Activated CD4-positive, alpha-beta memory T cell treated with anti-CD3 and anti-CD28 coated beads for 36 hours (primary cell): ENCODE measurements at regions of chrX and their contacts with region 1.

Region 1: GRCh38 chrX:9638871-9639270 is 126.8 kb downstream of the GPR143 start:
- DNase-seq: no peak
- H3K4me3 Mint-ChIP-seq: no peak overlapping the region
- H3K27ac Mint-ChIP-seq: no peak overlapping the region
- H3K4me1 Mint-ChIP-seq: peaks cover 25% of the 10 kb centered on the region
- H3K27me3 Mint-ChIP-seq: no peaks in the 10 kb centered on the region

Region 2: DNA sequence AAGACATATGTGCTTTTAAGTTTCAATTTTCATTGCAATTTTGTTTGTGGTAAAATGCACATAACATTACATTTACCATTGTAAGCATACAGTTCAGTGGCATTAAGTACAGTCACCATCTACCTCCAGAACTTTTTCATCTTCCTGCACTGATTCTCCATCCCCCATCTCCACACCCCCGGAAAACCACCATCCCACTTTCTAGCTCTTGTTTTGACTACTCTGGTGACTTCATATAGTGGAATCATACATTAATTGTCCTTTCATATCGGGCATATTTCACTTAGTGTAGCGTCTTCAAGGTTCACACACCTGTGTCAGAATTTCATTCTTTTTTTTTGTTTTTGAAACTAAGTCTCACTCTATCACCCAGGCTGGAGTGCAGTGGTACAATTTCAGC is 16.7 kb before region 1 on chrX:
- CTCF ChIA-PET with region 1: no interaction called
- POLR2A ChIA-PET with region 1: no interaction called
- intact Hi-C with region 1: loop called (anchors 1 kb)
- DNase-seq: peak; percentile 50
- H3K4me3 Mint-ChIP-seq: no peak overlapping the region
- H3K27ac Mint-ChIP-seq: no peak overlapping the region
- H3K4me1 Mint-ChIP-seq: peaks cover 40% of the 10 kb centered on the region
- H3K27me3 Mint-ChIP-seq: no peaks in the 10 kb centered on the region